SK-MEL-5 (cell line): ENCODE measurements at regions of chr15 and their contacts with region 1.

Region 1: DNA sequence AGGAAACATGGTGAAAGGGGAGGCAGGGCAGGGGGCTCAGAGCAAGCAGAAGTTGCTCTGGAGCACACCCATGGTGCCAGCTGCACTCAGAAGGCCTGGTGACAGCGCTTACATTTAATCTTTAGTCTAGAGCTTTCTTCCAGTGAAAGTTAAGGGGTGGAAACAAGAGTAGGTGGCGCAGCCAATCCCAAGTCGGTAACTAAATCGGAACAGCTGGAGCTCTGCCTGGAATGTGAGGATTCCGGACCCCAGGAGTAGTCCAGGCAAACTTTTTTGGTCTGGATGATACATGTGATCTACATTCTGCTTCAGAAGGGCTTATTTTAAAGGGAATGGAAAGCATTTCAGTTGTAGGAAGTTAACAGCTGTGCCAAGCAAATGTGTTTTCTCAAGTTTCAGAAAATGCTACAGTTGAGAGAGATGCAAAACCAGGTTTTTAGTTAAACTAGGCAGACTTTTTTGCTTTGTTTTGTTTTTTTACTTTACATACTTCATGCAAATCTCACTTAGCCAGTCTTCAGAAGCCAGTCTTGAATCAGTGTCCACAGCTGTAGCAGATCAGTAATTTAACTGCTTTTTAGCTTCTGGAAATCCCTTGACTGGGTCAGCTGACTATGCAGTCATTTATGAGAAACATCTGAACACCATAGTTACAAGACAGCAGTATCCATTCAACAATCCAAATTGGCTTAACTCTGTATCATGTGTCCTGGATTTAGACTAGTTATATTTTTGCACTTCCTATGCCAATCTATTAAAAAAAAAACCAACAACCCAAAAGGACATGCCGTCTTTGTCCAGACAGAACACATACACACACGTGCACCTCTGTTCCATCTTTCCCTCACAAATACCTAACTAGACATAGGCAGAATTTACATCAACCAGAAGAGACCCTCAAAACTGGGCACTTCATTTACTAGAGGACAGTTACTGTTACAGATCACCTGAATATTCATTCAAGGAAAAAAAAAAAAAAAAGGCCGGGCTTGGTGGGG is 33.2 kb downstream of the ZNF106 start:
- DNase-seq: peak; percentile 96

Region 2: GRCh38 chr15:42273102-42273899 is 184.4 kb before region 1 on chr15 and contains the starts of genes GANC and TMEM87A:
- in situ Hi-C with region 1: loop called (anchors 25 kb)
- DNase-seq: peak; percentile 98
- total RNA-seq, gene GANC: 19.3 and 19.5 TPM in 2 replicates
- total RNA-seq, gene TMEM87A: 80.2 and 83.2 TPM in 2 replicates